Activated naive CD4-positive, alpha-beta T cell treated with anti-CD3 and anti-CD28 coated beads for 36 hours (primary cell): ENCODE measurements at regions of chr3 and their contacts with region 1.

Region 1: GRCh38 chr3:154120961-154121700 is at the start of gene ARHGEF26:
- DNase-seq: peak; percentile 89
- H3K4me3 Mint-ChIP-seq: peak within 1 kb of the TSS; percentile 79
- H3K27ac Mint-ChIP-seq: no peak within 1 kb of the TSS
- H3K4me1 Mint-ChIP-seq: peaks cover 12% of the 10 kb centered on the region
- H3K27me3 Mint-ChIP-seq: peaks cover 58% of the 10 kb centered on the region
- total RNA-seq, gene ARHGEF26: 0.25 to 0.45 TPM

Region 2: DNA sequence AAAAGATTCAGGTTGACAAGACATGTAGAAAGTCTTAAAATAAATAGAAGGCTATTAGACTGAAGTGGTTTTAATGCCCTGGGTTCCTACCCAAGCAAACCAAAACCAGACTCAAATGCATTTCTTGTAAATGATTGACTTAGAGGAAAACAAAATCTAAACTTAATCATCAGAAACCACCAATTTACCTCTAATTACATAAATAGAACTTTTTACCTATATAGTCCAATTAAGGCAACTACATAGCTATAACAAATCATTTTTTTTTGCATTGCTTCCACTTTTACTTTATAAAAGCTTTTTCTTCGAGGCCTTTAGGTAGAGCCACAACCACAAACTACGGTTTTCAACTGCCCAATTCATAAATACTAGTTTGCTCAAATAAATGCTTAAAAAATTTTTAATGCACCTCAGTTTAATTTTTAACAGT is 231.2 kb before region 1 on chr3:
- CTCF ChIA-PET with region 1: no interaction called
- intact Hi-C with region 1: no loop called
- DNase-seq: no peak
- H3K4me3 Mint-ChIP-seq: no peak overlapping the region
- H3K27ac Mint-ChIP-seq: no peak overlapping the region
- H3K4me1 Mint-ChIP-seq: no peaks in the 10 kb centered on the region
- H3K27me3 Mint-ChIP-seq: no peaks in the 10 kb centered on the region

Region 3: DNA sequence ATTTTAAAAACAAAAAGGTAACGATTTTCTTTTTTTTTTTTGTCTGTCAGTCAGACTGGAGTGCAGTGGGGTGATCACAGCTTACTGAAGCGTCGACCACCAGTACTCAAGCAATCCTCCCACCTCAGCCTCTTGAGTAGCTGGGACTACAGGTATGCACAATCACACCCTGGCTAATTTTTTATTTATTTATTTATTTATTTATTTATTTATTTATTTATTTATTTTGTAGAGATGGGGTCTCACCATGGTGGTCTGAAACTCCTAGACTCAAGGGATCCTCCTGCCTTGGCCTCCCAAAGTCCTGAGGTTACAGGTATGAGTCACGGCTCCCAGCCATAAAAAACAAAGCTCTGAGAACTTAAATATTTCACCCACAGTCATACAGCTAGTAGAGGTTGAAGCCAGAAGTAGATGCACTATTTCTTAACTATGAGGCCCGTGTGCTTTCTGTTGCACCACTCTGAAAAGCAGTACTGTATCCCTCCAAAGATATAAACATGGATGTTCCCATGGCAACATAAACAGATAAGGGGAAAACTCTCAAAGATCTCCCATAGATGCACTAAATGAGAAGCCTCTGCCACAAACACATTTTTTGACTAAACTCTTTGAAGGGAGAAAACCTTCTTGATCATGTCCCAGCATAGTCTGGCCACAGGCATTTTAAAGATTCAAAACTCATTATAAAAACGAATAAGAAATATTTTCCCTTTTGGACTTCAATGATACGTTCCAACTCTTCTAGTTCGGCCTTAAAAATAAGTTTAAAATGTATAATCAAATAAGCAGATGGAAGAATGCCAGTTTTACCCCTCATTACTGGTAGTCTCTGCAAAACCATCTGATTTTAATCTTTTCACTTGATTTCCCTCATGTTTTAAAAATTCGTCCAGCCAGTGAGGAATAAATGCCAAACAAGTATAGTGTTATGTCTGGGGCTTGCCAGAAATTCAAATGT is 162.2 kb before region 1 on chr3:
- CTCF ChIA-PET with region 1: no interaction called
- intact Hi-C with region 1: no loop called
- DNase-seq: no peak
- H3K4me3 Mint-ChIP-seq: no peak overlapping the region
- H3K27ac Mint-ChIP-seq: no peak overlapping the region
- H3K4me1 Mint-ChIP-seq: no peaks in the 10 kb centered on the region
- H3K27me3 Mint-ChIP-seq: peaks cover 9% of the 10 kb centered on the region

Region 4: DNA sequence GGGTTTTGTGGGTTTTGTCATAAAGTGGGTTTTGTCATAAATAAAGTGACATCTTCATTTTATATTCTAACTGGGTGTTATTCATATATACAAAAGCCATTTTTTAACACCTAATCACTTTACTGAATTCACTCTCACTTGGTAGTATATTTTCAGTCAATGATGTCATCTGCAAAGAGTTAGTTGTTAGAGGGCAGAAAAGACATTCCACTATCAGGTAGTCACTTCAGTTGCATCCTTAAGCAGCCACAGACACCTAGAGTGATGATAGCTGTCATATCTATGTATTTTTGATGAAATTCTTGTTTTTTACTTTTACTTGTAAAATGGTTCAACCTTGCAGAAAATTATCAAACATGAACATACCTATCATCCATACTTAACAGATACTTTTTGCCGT is 114.2 kb after region 1 on chr3:
- CTCF ChIA-PET with region 1: no interaction called
- intact Hi-C with region 1: loop called (anchors 5 kb)
- DNase-seq: no peak
- H3K4me3 Mint-ChIP-seq: no peak overlapping the region
- H3K27ac Mint-ChIP-seq: no peak overlapping the region
- H3K4me1 Mint-ChIP-seq: peaks cover 2% of the 10 kb centered on the region
- H3K27me3 Mint-ChIP-seq: peaks cover 17% of the 10 kb centered on the region